Lower leg skin (tissue), 4 donors: ENCODE measurements at regions of chr11 and their contacts with region 1.

Region 1: DNA sequence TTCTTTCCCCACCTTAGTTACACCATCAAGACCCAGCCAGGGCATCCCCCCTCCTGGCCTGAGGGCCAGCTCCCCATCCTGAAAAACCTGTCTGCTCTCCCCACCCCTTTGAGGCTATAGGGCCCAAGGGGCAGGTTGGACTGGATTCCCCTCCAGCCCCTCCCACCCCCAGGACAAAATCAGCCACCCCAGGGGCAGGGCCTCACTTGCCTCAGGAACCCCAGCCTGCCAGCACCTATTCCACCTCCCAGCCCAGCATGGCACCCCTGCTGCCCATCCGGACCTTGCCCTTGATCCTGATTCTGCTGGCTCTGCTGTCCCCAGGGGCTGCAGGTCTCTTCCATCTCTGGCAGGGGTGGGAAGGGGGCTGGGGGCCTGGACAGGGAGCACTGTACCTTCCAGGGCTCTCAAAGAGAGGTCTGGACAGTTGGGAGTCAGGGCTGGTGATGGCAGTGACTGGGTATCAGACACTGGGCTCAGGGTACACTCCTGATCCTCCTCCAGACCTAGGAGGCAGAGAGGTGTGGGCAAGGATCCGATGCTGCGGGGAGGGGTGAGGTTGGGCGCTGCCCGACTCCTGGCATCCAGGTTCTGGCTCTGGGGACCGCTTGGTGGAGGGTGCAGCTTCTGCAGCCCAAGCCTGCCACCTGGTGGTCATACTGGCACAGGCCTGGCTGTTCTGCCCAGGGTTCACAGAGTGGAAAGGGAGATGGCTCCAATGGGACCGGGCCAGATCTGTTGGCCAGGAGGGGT is at the start of gene UPK2:
- DNase-seq: peak; percentile 80 to 97
- H3K4me3 ChIP-seq: no peak within 1 kb of the TSS
- CTCF ChIP-seq: peak in 2 of 3 donors; percentile 63 to 93
- POLR2A ChIP-seq: no peak
- total RNA-seq, gene UPK2: not detected

Region 2: DNA sequence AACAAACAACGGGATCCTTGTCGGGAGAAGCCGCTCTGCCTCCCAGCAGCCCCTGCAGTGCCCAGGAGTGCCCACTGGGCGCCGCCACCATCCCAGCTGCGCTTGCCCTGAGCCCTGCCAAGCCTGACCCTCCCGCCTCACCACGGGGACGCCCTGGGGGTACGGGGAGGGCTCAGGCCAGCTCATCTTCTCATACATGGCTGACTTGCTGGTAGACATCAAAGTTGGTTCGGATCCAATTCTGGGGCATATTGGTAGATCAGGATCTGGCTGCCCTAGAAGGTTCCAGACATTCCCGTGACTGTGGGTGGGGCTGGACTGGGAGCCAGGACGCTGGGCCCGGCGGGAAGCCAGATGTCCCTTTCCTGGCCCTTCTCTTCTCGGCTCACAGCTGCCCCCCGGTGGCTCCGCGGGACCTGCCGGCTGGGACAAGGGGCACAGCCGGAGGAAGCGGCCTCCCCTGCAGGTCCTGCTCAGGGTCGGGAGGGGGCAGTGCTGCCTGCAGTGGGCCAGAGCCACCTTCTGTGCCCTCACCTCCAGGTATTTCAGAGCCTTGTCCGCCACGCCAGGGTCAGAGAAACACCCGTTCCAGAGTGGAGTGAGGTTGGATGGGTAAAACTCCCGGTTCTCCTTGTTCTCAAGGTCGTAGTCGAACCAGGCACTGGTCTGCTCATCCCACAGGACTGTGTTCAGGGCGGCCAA is 266.3 kb before region 1 on chr11:
- intact Hi-C with region 1: loop called (anchors 5 kb)
- DNase-seq: peak; percentile 78 to 97
- H3K4me3 ChIP-seq: no peak overlapping the region
- CTCF ChIP-seq: peak in 2 of 3 donors; percentile 38 to 55
- POLR2A ChIP-seq: no peak

Region 3: GRCh38 chr11:118901494-118902335 is 54.6 kb before region 1 on chr11:
- intact Hi-C with region 1: loop called (anchors 5 kb)
- DNase-seq: no peak
- H3K4me3 ChIP-seq: no peak overlapping the region
- CTCF ChIP-seq: no peak
- POLR2A ChIP-seq: no peak

Region 4: GRCh38 chr11:119389611-119390254 is 433.5 kb after region 1 on chr11:
- intact Hi-C with region 1: no loop called
- DNase-seq: no peak
- H3K4me3 ChIP-seq: no peak overlapping the region
- CTCF ChIP-seq: no peak
- POLR2A ChIP-seq: no peak